Cardiac septum (tissue), 1 donor: ENCODE measurements at regions of chr3 and their contacts with region 1.

Region 1: DNA sequence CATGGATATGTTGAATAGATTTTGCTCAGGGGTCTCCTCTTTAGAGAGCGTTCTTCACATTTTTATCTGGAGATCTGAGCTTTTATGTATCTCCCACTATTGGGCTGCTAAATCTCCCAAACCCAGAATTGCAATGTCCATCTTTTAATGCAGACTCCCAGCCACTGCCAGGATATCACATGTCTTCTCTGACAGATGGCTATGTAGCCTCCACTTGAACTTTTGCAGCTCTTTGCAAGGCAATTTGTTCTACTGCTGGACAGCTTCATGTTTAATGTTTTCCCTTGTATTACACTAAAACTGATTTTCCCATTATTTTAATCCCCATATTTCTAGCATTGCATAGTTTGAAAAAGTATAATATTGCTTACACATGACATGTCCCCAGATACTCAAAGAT is 177.2 kb downstream of the LPP start:
- DNase-seq: no peak

Region 2: DNA sequence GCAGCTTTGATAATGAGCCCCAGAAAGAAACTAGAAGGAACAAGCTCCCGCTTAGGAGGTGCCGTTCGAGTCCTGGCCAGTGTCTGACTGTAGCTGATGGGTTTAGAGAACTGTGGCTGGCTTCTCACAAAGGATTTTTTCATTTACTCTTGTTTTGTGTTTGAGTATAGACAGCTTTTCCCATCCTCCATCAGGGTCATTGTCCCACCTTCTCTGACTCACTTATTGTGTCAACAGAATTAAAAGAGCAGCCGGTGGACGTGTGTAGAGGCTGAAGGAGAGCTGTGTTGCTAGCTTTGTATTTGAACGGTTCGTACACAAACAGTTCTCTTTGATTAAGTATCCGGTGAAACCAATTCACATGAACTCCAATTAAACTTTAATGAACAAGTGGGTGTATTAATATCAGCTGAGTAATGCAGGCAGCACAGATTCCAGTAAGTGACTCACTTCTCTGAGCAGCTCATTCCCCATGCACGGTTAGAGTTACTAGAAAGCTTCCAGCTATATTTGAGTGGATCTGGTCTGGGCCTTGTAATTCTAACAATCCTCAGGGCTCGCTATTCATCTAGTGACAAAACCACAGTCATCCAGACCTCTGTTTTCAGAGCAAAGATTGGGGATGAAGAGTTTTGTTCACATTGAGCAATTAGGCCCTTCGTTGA is 36.2 kb before region 1 on chr3:
- intact Hi-C with region 1: loop called (anchors 5 kb)
- DNase-seq: no peak